B cell (primary cell): ENCODE measurements at regions of chr9 and their contacts with region 1.

Region 1: GRCh38 chr9:131656356-131657036 is 83.4 kb downstream of the RAPGEF1 start:
- DNase-seq: peak; percentile 95
- ATAC-seq: peak; percentile 96
- H3K4me3 ChIP-seq: peak overlapping the region in 2 of 5 experiments; percentile 2 to 6
- H3K4me3 Mint-ChIP-seq: peak overlapping the region; percentile 77
- H3K27ac ChIP-seq: peak overlapping the region; percentile 63 to 90
- H3K27ac Mint-ChIP-seq: peak overlapping the region; percentile 93
- H3K4me1 ChIP-seq: peaks cover 70 to 77% of the 10 kb centered on the region in 2 donors
- H3K4me1 Mint-ChIP-seq: peaks cover 90% of the 10 kb centered on the region
- H3K27me3 ChIP-seq: no peaks in the 10 kb centered on the region
- H3K27me3 Mint-ChIP-seq: no peaks in the 10 kb centered on the region
- CTCF ChIP-seq: no peak

Region 2: DNA sequence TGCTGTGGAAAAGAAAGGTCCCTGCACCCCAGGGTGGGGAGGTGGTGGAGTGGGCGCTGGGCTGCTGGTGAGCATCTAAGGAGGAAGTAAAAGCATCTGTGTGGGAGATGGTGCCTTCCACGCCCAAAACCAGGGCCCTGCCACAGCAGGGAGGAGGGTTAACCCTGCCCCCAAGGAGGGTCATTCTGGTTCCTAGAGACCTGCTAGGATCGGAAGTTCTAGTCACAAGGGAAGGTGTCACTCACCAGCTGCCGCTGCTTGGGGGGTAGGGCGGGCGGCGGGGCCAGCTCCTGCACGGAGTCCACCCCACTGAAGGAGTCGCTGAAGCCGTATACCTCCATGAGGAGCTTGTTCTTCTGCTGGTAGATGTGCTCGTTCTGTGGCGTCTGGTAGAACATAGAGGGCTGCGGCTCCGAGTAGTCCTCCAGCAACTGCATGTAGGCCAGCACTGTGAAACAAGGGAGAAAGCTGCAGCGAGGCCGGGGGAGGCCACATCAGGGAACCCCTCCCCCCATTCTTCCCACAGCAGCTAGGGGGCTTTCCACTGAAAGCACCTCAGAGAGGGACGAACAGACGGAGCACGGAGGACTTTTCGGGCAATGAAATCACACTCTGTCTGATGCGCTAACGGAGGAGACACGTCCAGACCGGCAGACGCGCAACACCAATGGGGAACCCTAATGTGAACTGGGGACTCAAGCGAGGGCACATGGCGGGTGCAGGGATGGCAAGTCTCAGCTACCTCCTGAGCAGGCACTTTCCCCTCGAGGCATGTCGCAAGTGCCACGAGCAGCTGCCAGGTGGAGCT is 34.7 kb before region 1 on chr9:
- CTCF ChIA-PET with region 1: interaction called, 6 read pairs
- POLR2A ChIA-PET with region 1: no interaction called
- intact Hi-C with region 1: loop called (anchors 5 kb)
- DNase-seq: peak; percentile 75
- ATAC-seq: peak; percentile 84
- H3K4me3 ChIP-seq: peak overlapping the region in 1 of 5 experiments; percentile 18
- H3K4me3 Mint-ChIP-seq: peak overlapping the region; percentile 85
- H3K27ac ChIP-seq: peak overlapping the region; percentile 65 to 81
- H3K27ac Mint-ChIP-seq: peak overlapping the region; percentile 81
- H3K4me1 ChIP-seq: peaks cover 25 to 37% of the 10 kb centered on the region in 2 donors
- H3K4me1 Mint-ChIP-seq: peaks cover 43% of the 10 kb centered on the region
- H3K27me3 ChIP-seq: no peaks in the 10 kb centered on the region
- H3K27me3 Mint-ChIP-seq: no peaks in the 10 kb centered on the region
- CTCF ChIP-seq: no peak

Region 3: DNA sequence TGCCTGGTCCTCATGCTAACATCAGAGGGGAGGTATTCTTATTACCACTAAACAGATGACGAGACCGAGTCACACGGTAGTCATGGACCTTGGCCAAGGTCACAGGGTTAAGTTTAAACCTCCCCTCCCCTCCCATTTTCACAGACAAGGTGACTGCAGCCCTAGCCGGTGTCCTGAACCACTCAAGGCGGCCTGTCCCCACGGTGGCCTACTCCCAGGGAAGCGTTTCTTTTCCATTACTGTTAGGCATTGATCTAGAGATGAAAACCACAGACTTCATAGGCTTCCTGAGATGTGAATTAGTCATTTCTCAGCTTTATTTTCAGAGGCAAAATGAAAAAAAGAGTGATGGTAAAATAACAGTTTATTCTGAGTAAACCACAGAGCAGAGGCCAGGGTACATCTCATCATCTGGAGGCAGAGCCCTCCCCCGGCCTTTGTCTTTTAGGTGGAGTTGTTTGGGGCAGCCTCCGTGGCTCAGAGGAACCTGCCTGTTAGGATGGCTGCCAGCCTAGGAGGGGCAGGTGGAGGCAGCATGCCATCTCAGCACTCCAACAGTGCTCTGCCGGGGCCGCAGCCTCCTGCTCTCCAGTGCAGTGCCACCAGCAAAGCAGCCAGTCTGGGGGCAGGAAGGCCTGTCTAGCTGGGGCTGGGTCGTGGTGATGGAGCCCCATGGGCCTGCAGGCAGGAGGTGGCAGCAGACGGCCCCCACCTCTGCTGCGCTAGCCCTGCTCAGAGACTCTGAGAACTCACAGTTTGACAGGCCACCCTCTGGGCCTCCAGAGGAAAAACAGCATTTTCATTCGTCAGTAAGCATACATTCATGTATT is 12.2 kb after region 1 on chr9:
- CTCF ChIA-PET with region 1: interaction called, 4 read pairs
- POLR2A ChIA-PET with region 1: interaction called, 6 read pairs
- intact Hi-C with region 1: loop called (anchors 1 kb)
- DNase-seq: peak; percentile 81
- ATAC-seq: peak; percentile 57
- H3K4me3 ChIP-seq: peak overlapping the region in 3 of 5 experiments; percentile 0 to 25 (median 11)
- H3K4me3 Mint-ChIP-seq: peak overlapping the region; percentile 81
- H3K27ac ChIP-seq: peak overlapping the region; percentile 71 to 96
- H3K27ac Mint-ChIP-seq: peak overlapping the region; percentile 94
- H3K4me1 ChIP-seq: peaks cover 89 to 92% of the 10 kb centered on the region in 2 donors
- H3K4me1 Mint-ChIP-seq: peaks cover 94% of the 10 kb centered on the region
- H3K27me3 ChIP-seq: no peaks in the 10 kb centered on the region
- H3K27me3 Mint-ChIP-seq: no peaks in the 10 kb centered on the region
- CTCF ChIP-seq: no peak

Region 4: DNA sequence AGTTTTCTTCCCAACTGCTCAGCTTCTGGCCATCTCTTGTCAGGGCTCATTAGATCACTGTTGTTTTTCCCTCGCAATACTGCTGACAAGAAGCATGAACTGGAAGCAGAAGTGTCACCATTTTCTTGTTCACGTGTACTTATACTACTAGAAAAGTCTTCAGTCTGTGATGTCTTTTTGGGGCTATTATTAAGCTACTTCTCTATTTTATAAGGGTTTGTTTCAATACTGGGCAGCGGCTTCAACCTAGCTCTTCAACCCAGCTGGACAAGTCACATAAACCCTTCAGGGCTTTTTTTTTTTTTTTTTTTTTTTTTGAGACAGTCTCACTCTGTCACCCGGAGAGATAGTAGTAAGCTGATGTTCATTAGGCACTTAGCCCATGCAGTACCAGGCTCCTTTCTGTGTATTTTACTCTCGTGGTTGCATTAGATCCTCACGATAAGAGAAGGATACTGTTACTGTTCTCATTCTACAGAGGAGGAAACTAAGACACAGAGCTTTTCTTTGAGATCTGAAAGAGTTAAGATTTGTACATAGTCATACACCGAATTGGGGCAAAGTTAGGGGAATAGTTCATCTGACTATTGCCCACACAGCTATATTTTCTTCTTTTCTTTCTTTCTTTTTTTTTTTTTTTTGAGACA is 62.9 kb after region 1 on chr9:
- CTCF ChIA-PET with region 1: interaction called, 5 read pairs
- POLR2A ChIA-PET with region 1: interaction called, 13 read pairs
- intact Hi-C with region 1: no loop called
- DNase-seq: peak; percentile 64
- ATAC-seq: peak; percentile 66
- H3K4me3 ChIP-seq: peak overlapping the region in 1 of 5 experiments; percentile 30
- H3K4me3 Mint-ChIP-seq: peak overlapping the region; percentile 44
- H3K27ac ChIP-seq: peak overlapping the region; percentile 59 to 74
- H3K27ac Mint-ChIP-seq: peak overlapping the region; percentile 77
- H3K4me1 ChIP-seq: peaks cover 58 to 77% of the 10 kb centered on the region in 2 donors
- H3K4me1 Mint-ChIP-seq: peaks cover 82% of the 10 kb centered on the region
- H3K27me3 ChIP-seq: no peaks in the 10 kb centered on the region
- H3K27me3 Mint-ChIP-seq: no peaks in the 10 kb centered on the region
- CTCF ChIP-seq: no peak

Region 5: DNA sequence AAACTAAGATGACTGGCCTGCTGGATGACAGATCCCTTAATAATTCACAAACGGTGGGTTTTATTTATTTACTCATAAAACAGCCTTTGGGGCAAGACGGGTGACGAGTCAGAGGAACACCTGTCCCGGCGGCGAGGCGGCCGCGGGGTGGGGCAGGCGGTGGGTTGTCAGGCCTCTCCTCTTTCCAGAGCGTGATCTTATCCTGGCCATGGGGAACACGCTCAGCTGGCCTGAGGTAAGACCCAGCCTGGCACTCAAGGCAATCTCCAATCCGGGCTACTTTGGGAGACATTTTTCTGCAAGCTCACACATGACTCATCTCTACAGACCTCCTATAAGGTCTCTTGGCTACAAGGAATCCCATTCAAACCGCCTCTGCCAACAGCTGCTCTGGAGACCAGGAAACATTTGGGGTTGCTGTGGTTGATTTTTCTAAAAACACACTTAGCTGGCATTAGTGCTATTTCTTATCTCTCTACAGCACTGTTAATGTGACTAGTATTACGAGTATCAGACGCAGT is 77.1 kb after region 1 on chr9:
- CTCF ChIA-PET with region 1: interaction called, 13 read pairs
- POLR2A ChIA-PET with region 1: interaction called, 3 read pairs
- intact Hi-C with region 1: loop called (anchors 1 kb)
- DNase-seq: peak; percentile 68
- ATAC-seq: no peak
- H3K4me3 ChIP-seq: peak overlapping the region; percentile 11 to 52 (median 29)
- H3K4me3 Mint-ChIP-seq: peak overlapping the region; percentile 78
- H3K27ac ChIP-seq: peak overlapping the region; percentile 99 to 100
- H3K27ac Mint-ChIP-seq: peak overlapping the region; percentile 88
- H3K4me1 ChIP-seq: peaks cover 86 to 97% of the 10 kb centered on the region in 2 donors
- H3K4me1 Mint-ChIP-seq: peaks cover 91% of the 10 kb centered on the region
- H3K27me3 ChIP-seq: no peaks in the 10 kb centered on the region
- H3K27me3 Mint-ChIP-seq: no peaks in the 10 kb centered on the region
- CTCF ChIP-seq: no peak